Left ventricle myocardium inferior (tissue), 1 donor: ENCODE measurements at regions of chr5 and their contacts with region 1.

Region 1: DNA sequence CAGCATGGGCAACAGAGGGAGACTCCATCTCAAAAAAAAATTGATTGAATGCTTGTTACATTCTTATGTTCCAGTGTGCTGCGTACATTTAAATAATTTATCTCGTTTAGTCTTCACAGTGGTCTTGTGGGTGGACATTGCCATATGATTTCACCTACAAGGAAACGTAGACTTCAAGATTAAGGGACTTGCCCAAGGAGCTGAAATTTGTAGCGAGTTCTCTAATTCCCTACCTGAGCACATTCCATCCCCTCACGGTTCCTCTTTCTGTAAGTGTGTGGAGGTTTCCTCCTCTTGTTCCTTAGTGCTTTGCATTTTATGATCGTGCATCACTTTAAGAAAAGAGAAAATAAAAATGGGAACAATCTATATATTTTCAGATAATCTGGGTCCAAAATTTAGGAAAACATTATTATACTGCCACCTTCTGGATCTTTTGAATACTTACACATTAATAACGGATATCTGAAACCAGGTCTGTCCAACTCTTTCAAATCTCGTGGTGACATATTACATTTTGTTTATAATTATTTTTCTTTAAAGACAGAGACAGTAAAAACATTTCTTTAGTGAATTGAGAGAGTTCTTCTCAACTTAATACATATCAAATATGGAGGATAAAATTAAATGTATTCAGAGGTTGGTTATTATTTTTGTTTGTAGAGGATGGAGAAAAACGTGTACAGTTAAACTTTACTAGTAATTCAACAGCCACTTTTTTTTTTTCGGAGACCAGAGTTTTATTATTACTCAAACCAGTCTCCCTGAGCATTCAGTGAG is 29.9 kb upstream of the C7 start:
- DNase-seq: no peak
- H3K4me3 ChIP-seq: no peak overlapping the region
- H3K27ac ChIP-seq: no peak overlapping the region
- H3K4me1 ChIP-seq: no peaks in the 10 kb centered on the region
- H3K27me3 ChIP-seq: no peaks in the 10 kb centered on the region
- CTCF ChIP-seq: peak; percentile 71

Region 2: DNA sequence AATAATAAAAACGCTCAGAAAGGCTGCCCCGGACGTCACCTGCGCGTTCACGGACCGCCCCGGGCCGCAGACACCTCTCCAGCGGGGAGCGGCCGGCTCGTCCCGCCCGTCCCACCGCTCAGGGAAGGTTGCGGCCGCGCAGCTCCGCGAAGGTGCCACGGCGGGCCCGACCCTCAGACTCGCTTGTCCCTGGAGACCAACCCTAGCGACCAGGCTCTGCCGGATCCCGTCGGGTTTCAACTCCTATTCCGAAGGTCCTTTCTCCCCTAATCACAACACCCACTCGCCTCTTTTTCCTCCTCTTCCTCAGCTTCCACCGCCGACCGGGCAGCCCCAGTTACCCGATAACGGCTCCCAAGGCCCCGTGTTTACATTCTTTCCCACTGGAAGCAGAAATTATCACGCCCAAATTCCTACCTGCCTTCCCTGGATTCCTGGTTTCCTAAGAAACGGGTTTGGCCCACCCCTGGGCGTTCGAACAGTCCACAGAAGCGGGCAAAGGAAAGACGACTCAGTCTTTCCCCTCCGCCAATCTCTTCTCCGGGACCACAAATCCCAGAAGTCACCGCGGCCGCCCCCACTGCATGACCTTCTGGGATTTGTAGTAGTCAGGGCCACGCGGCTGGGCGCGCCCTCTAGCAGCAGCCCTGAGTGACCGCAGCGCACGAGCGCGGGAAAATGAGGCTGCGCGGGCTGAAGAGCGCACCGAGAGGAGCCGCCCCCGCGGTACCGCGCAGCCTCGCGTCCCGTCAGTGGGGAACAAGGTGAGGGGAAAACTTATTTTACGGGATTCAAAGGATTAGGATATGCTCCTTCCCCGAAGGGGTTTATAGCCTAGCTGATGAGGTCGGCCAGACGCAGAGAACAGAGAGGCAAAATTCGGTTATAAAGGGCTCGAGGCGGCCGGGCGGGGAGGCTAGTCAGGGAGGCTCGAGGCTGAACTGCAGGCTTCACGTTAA is 123.7 kb before region 1 on chr5 and contains the start of gene TTC33:
- intact Hi-C with region 1: loop called (anchors 10 kb)
- DNase-seq: peak; percentile 96
- H3K4me3 ChIP-seq: peak within 1 kb of the TSS; percentile 87
- H3K27ac ChIP-seq: peak within 1 kb of the TSS; percentile 88
- H3K4me1 ChIP-seq: peaks cover 36% of the 10 kb centered on the region
- H3K27me3 ChIP-seq: no peaks in the 10 kb centered on the region
- CTCF ChIP-seq: peak; percentile 73
- total RNA-seq, gene TTC33: 14.3 TPM